HEK293 (cell line): ENCODE measurements at regions of chr1 and their contacts with region 1.

Region 1: DNA sequence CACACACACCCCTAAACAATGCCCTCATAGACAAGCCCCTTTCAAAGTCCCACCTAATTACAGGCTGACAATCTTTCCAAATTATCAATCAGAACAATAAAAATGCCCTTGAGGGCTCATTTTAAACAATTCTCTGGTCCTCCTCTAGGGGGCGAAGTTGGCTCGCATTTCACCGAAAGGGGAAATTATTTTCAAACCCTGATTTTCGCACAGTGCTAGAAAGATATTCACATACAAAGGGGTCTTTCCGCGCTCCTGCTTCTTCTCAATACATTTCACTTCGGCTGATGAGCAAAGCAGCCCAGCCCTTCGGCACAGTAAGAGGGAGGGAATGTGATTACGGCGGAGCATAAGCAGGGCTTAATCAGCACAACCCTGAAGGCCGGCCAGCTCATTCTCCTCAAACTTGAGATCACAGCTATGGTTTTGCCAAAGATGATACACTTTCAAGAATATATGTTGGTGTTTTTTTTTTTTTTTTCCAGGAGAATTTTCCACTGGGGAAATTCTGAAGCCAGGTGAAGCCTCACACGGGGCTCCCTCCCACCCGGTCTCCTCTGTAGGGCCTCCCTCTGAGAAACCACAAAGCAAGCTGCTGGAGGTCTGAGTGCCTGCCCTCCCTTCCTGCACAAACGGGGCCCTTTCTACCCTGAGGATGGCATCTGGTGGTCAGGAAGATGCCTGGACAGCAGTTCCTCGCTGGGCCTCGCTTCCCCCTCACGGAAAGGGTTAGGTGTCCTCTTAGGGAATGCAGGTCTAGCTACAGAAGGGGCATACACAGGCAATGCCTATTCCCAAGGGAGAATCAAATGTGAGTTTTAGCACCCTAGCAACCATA is 66.9 kb downstream of the GNG12 start:
- H3K4me3 ChIP-seq: peak overlapping the region; percentile 20
- H3K27ac ChIP-seq: no peak overlapping the region
- H3K4me1 ChIP-seq: peaks cover 7% of the 10 kb centered on the region; the same call in 1 of the 2 replicates
- CTCF ChIP-seq: peak; percentile 62

Region 2: DNA sequence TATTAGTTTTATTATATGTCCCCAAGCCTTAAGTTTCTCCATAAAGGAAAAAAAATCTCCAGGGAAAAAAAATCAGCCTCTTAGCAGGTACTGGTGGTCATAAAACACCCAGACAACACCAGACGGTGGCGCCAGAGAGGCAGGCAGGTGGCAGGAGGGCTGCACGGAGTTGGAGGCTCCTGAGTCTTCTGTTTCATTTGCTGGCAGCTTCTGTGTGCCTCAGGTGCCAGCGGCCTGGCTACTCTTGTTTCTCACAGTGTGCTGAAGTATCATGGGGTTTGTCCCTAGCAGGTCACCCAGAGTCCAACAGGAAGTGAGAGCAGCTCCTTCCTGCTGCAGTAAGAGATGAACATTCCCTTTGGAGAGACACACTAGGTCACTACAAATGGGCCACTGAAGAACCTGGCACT is 204.7 kb before region 1 on chr1:
- CTCF ChIA-PET with region 1: interaction called, 95 read pairs
- POLR2A ChIA-PET with region 1: no interaction called
- H3K4me3 ChIP-seq: no peak overlapping the region
- H3K27ac ChIP-seq: no peak overlapping the region
- H3K4me1 ChIP-seq: no peaks in the 10 kb centered on the region
- CTCF ChIP-seq: peak; percentile 54; the same call in 1 of the 2 replicates

Region 3: GRCh38 chr1:67726224-67726623 is 40.1 kb before region 1 on chr1:
- CTCF ChIA-PET with region 1: no interaction called
- POLR2A ChIA-PET with region 1: no interaction called
- H3K4me3 ChIP-seq: no peak overlapping the region
- H3K27ac ChIP-seq: no peak overlapping the region
- H3K4me1 ChIP-seq: no peaks in the 10 kb centered on the region; the same call in 1 of the 2 replicates
- CTCF ChIP-seq: no peak

Region 4: GRCh38 chr1:67749844-67750689 is 16.3 kb before region 1 on chr1:
- CTCF ChIA-PET with region 1: interaction called, 27 read pairs
- POLR2A ChIA-PET with region 1: interaction called, 6 read pairs
- H3K4me3 ChIP-seq: no peak overlapping the region
- H3K27ac ChIP-seq: peak overlapping the region; percentile 58
- H3K4me1 ChIP-seq: peaks cover 13% of the 10 kb centered on the region
- CTCF ChIP-seq: no peak

Region 5: DNA sequence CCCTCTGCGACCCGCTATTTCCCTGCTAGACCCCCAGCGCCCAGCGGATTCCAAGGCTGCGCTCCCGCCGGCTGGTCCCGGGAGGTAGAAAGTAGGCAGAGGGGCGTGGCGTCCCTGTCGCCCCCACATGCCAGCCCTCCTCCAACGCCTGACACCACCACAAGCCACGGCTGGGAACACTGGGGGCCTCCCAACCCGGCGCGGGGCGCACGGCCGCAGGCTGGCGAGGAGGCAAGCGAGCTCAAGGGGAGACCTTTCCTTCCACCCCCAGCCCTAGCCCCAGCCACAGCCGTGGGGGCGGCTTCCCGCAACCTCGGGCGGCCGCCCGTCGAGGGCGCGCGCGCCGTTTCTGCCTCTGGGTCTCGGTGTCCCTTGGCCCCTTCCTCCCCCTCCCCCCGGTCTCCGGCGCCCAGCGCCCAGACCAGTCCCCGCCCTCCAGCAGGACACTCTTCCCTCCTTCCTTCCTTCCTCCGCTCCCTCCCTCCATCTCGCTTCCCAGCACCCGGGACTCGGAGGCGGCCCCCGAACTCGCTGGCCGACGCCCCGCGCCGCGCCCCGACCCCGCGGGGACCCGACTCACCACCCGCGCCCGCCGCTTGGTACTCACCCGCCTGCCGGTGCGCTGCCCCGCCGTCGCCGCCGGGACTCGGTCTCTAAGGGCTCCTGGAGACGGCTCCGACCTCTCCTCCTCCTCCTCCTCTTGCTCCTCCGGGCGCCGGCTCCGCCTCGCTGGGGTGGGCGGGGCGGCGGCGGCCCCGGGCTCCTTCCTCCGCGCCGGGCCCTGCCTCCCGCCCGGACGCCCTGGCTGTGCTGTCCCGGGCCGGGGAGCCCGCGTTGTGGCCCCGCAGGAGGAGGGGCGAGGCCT is 66.6 kb after region 1 on chr1 and contains the start of gene GNG12:
- CTCF ChIA-PET with region 1: interaction called, 9 read pairs
- POLR2A ChIA-PET with region 1: interaction called, 16 read pairs
- H3K4me3 ChIP-seq: peak within 1 kb of the TSS; percentile 62
- H3K27ac ChIP-seq: peak within 1 kb of the TSS; percentile 91
- H3K4me1 ChIP-seq: peaks cover 31% of the 10 kb centered on the region
- CTCF ChIP-seq: peak; percentile 64

Region 6: DNA sequence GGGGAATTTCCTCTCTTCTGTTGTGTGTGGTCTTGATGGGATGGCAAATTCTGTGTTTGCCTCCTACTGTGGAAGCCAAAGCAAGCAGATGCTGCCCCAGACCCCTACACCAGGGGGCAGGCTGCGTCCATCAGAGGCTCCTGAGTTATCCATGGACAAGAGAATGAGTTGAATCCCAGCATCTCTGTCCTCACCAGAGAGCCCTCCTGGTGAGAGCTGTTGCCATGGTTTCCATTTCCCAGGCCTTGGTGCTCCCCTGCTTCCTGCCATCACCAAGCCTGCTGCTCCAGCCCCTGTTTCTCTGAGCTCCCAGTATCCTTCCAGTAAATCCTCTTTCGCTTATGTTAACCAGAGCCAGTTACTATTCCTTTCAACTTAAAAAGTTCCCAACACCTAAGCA is 87.3 kb after region 1 on chr1:
- CTCF ChIA-PET with region 1: interaction called, 52 read pairs
- POLR2A ChIA-PET with region 1: interaction called, 5 read pairs
- H3K4me3 ChIP-seq: no peak overlapping the region
- H3K27ac ChIP-seq: no peak overlapping the region
- H3K4me1 ChIP-seq: peaks cover 8% of the 10 kb centered on the region
- CTCF ChIP-seq: peak; percentile 86

Region 7: GRCh38 chr1:68107771-68108170 is 341.4 kb after region 1 on chr1:
- CTCF ChIA-PET with region 1: interaction called, 14 read pairs
- POLR2A ChIA-PET with region 1: no interaction called
- H3K4me3 ChIP-seq: no peak overlapping the region
- H3K27ac ChIP-seq: no peak overlapping the region
- H3K4me1 ChIP-seq: no peaks in the 10 kb centered on the region
- CTCF ChIP-seq: no peak

Region 8: GRCh38 chr1:68346188-68346808 is 579.9 kb after region 1 on chr1:
- CTCF ChIA-PET with region 1: interaction called, 13 read pairs
- POLR2A ChIA-PET with region 1: no interaction called
- H3K4me3 ChIP-seq: no peak overlapping the region
- H3K27ac ChIP-seq: no peak overlapping the region
- H3K4me1 ChIP-seq: no peaks in the 10 kb centered on the region
- CTCF ChIP-seq: no peak